Activated CD4-positive, alpha-beta memory T cell treated with anti-CD3 and anti-CD28 coated beads for 36 hours (primary cell): ENCODE measurements at regions of chr6 and their contacts with region 1.

Region 1: DNA sequence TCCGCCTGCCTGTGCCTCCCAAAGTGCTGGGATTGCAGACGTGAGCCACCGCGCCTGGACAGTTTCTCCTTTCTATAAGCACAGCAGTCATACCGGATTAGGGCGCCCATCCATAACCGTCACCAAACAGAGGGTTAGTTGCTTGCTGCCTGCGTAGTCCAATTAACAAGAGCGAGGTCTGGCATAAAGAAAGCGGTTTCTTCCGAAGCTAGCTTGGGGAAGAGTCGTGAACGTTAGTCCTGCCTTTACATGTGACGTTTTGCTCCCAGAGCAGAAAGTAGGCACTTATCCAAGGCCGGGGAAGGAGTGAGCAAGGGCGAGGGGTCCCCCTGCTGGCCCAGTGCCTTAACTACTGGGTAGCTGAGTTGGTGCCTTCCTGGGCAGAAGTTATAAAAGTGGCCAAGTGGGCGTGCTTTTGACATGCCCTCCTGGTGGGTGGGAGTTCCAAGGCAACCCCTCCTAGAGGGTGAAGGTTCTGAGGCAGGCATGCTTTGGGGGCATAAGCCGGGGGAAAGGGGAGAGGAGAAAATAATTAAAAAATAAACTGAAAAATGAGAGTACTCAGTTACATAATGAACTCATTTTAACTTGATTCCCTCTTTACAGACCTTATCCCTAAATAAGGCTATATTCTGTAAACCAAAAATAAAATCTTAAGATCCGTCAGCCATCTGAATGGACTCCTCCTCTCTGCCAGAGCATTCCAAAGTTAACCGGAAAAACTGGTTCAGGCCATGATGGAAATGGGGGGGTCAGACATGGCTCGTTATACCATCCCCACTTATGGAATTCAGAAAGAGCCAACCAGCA is 88.0 kb downstream of the FAM217A start:
- DNase-seq: peak; percentile 81
- H3K4me3 Mint-ChIP-seq: no peak overlapping the region
- H3K27ac Mint-ChIP-seq: no peak overlapping the region
- H3K4me1 Mint-ChIP-seq: peaks cover 8% of the 10 kb centered on the region
- H3K27me3 Mint-ChIP-seq: no peaks in the 10 kb centered on the region

Region 2: GRCh38 chr6:4008324-4009047 is 17.6 kb after region 1 on chr6:
- CTCF ChIA-PET with region 1: interaction called, 13 read pairs
- POLR2A ChIA-PET with region 1: no interaction called
- intact Hi-C with region 1: no loop called
- DNase-seq: no peak
- H3K4me3 Mint-ChIP-seq: no peak overlapping the region
- H3K27ac Mint-ChIP-seq: no peak overlapping the region
- H3K4me1 Mint-ChIP-seq: peaks cover 53% of the 10 kb centered on the region
- H3K27me3 Mint-ChIP-seq: no peaks in the 10 kb centered on the region